Tibial artery (tissue), 4 donors: ENCODE measurements at regions of chr5 and their contacts with region 1.

Region 1: DNA sequence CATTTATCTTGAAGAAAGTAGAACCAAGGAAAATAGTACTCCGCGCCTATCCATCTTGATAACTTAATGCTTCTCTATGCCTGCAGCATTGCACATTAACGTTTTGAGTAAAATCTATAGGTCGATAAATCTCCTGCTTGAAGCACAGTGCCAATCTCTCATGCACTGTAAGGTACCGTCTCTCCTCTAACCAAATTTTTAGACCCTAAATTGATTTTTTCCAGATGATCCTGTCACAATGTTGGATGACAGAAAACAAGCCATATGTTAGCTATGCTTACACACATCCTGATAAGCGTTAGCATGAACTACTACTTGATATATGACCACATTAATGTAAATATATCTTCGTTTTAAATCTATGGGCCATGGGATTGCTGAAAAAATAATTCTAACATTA is 723.8 kb upstream of the CDH6 start:
- DNase-seq: no peak
- H3K4me3 ChIP-seq: no peak overlapping the region
- H3K27ac ChIP-seq: no peak overlapping the region
- H3K4me1 ChIP-seq: no peaks in the 10 kb centered on the region
- H3K27me3 ChIP-seq: no peaks in the 10 kb centered on the region
- CTCF ChIP-seq: no peak

Region 2: GRCh38 chr5:29089591-29090130 is 1380.0 kb before region 1 on chr5:
- intact Hi-C with region 1: loop called (anchors 5 kb)
- DNase-seq: no peak
- H3K4me3 ChIP-seq: no peak overlapping the region
- H3K27ac ChIP-seq: no peak overlapping the region
- H3K4me1 ChIP-seq: no peaks in the 10 kb centered on the region
- H3K27me3 ChIP-seq: no peaks in the 10 kb centered on the region
- CTCF ChIP-seq: no peak

Region 3: GRCh38 chr5:30413540-30413939 is 56.2 kb before region 1 on chr5:
- intact Hi-C with region 1: no loop called
- DNase-seq: no peak
- H3K4me3 ChIP-seq: no peak overlapping the region
- H3K27ac ChIP-seq: no peak overlapping the region
- H3K4me1 ChIP-seq: no peaks in the 10 kb centered on the region
- H3K27me3 ChIP-seq: no peaks in the 10 kb centered on the region
- CTCF ChIP-seq: no peak

Region 4: GRCh38 chr5:30436691-30437090 is 33.0 kb before region 1 on chr5:
- intact Hi-C with region 1: loop called (anchors 2 kb)
- DNase-seq: no peak
- H3K4me3 ChIP-seq: no peak overlapping the region
- H3K27ac ChIP-seq: no peak overlapping the region
- H3K4me1 ChIP-seq: no peaks in the 10 kb centered on the region
- H3K27me3 ChIP-seq: no peaks in the 10 kb centered on the region
- CTCF ChIP-seq: no peak

Region 5: DNA sequence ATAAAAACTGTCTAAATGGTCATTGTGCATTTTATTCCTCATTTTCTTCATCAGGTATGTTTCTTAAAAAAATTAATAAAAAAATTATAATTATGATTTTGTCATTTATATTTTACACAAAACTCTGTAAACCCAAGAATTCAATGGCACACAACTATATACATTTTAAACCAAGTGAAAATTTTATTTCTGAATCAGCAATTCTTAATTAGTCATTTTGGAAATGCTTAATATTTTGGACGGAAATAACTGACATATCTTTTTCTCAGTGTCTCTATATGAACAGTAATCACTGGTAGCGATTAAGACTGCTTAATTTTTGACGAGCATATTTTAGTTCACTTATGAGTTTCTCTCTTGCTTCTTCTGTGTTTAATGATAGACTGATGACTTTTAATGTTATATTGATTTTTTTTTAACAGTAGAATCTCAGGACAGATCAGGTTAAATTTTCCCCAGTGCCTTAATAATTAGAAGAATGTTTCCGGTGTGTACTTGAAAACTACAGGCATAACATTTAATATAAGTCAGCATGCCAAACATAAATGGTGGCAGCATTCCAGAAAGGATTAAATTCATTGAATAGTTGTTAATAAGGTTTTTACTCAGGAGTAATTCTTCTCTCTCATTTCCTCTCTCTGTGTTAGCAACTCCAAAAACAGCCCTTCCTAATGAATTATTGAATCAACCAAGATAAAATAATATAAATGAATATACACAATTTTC is 79.1 kb after region 1 on chr5:
- intact Hi-C with region 1: no loop called
- DNase-seq: no peak
- H3K4me3 ChIP-seq: no peak overlapping the region
- H3K27ac ChIP-seq: no peak overlapping the region
- H3K4me1 ChIP-seq: no peaks in the 10 kb centered on the region
- H3K27me3 ChIP-seq: no peaks in the 10 kb centered on the region
- CTCF ChIP-seq: no peak